K562 (cell line): ENCODE measurements at regions of chr7 and their contacts with region 1.

Region 1: DNA sequence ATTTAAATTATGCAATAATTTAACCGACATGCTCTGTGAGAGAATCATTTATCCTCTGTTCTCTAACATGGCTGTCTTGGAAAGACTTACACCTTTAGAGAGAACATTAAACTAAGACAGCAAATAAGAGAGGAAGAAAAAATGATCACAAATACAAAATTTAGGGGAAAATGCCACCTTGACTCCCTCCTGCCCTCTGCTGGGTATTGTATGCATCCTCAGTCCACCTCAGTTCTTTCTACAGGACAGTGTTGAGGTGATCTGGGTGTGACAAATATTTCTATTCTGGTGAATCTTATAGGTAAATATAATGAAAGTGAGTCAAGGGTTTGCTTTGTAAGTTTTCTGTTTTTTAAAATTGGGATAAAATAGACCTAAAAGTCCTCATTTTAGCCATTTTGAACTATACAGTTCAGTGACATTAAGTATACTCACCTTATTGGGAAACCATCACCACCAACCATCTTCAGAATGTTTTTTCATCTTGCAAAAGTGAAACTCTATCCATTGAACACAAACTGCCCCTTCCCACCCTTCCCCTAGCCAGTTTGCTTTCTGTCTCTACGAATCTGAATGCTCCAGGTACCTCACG is 61.5 kb upstream of the ELMO1 start:
- DNase-seq: peak; percentile 23 to 34 (median 26)
- ATAC-seq: peak; percentile 76
- H3K4me3 ChIP-seq: no peak overlapping the region
- H3K27ac ChIP-seq: no peak overlapping the region
- H3K4me1 ChIP-seq: no peaks in the 10 kb centered on the region
- H3K27me3 ChIP-seq: peaks cover 0 to 4% of the 10 kb centered on the region in 2 experiments; a peak in 2 of 5 replicates
- CTCF ChIP-seq: peak; percentile 47 to 68 (median 63); a peak in 5 of 6 replicates
- EP300 ChIP-seq: no peak
- POLR2A ChIP-seq: no peak
- RAD21 ChIP-seq: peak; percentile 59 to 69

Region 2: GRCh38 chr7:37208528-37208927 is 301.6 kb before region 1 on chr7:
- CTCF ChIA-PET with region 1: interaction called, 3 read pairs
- POLR2A ChIA-PET with region 1: no interaction called
- in situ Hi-C with region 1: no loop called
- intact Hi-C with region 1: loop called (anchors 2 kb)
- DNase-seq: peak; percentile 15 to 56 (median 27)
- ATAC-seq: peak; percentile 90
- H3K4me3 ChIP-seq: no peak overlapping the region
- H3K27ac ChIP-seq: no peak overlapping the region
- H3K4me1 ChIP-seq: no peaks in the 10 kb centered on the region
- H3K27me3 ChIP-seq: no peaks in the 10 kb centered on the region
- CTCF ChIP-seq: peak; percentile 53 to 71 (median 54); a peak in 5 of 6 replicates
- EP300 ChIP-seq: no peak
- POLR2A ChIP-seq: no peak
- RAD21 ChIP-seq: peak; percentile 74 to 78